ENCODE measurements at regions of chr7 and their contacts with region 1.

Region 1: DNA sequence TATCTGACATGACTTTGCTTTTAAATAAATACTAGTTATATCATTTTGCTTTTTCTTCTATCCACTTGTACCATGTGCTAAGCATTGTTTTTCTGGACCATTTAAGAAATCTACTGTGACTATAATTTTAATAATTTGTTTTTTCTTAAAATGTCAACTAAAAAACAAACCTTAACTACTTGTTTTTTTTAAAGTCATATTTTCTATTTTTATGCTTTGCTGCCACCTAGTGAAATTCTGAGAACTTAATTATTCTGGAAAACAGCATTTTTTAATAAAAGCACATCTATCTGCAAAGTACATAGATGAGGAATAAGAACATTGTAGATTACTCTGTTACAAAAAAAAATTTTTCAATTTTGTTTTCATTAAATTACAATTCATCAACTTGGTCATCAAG is 47.4 kb downstream of the ORC5 start:
- DNase-seq: no peak
- ATAC-seq: no peak
- H3K4me3 Mint-ChIP-seq: no peak overlapping the region
- H3K27ac Mint-ChIP-seq: no peak overlapping the region
- H3K4me1 Mint-ChIP-seq: no peaks in the 10 kb centered on the region
- H3K27me3 Mint-ChIP-seq: no peaks in the 10 kb centered on the region
- CTCF ChIP-seq: peak; percentile 58

Region 2: DNA sequence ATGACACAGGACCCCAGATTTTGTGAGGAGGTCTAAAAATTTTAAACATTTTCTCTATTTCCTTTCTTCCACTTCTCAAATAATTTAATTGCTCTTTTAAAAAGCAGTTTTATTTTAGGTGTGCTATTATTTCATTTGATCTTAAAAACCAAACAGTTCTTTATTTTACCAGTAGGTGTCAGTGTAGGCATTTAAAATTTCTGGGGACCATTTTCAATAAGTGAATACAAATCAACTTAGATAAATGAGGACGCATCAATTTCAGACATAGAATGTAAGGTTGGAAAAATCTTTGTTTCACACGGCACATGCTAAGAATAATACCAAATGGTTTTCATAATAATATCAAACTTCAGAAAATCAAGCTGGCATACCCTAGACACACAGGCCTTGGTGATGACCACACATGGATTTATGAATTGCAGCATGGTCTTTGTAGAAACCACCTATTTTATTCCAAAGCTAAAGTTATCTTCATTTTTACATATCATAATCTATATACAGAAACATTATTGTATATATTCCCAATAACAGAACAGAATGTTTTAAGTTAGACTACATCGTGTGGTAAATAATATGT is 586.8 kb before region 1 on chr7:
- CTCF ChIA-PET with region 1: interaction called, 6 read pairs
- POLR2A ChIA-PET with region 1: no interaction called
- intact Hi-C with region 1: loop called (anchors 5 kb)
- DNase-seq: no peak
- ATAC-seq: no peak
- H3K4me3 Mint-ChIP-seq: no peak overlapping the region
- H3K27ac Mint-ChIP-seq: no peak overlapping the region
- H3K4me1 Mint-ChIP-seq: no peaks in the 10 kb centered on the region
- H3K27me3 Mint-ChIP-seq: peaks cover 7% of the 10 kb centered on the region
- CTCF ChIP-seq: peak; percentile 69

Region 3: GRCh38 chr7:103996639-103997038 is 163.7 kb before region 1 on chr7:
- CTCF ChIA-PET with region 1: no interaction called
- POLR2A ChIA-PET with region 1: no interaction called
- intact Hi-C with region 1: no loop called
- DNase-seq: no peak
- ATAC-seq: no peak
- H3K4me3 Mint-ChIP-seq: no peak overlapping the region
- H3K27ac Mint-ChIP-seq: no peak overlapping the region
- H3K4me1 Mint-ChIP-seq: no peaks in the 10 kb centered on the region
- H3K27me3 Mint-ChIP-seq: peaks cover 7% of the 10 kb centered on the region
- CTCF ChIP-seq: no peak

Region 4: DNA sequence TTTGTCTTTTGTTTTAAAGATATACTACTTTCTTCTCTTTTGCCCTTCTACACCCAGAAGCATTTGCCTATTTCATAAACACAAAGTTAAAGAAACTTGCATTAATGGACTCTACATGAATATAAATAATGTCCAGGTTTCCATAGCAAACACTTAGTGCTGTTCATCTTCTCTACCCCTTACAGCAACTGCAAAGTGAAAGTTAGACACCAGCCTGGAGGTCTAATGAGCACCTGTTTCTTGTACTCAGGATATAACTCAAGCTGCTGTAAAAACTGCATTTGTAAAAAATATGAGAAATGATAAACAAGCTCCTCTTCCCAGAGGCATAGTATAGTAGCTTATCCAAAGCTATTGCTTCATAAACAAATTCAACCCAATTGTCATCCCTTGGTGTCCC is 94.9 kb before region 1 on chr7:
- CTCF ChIA-PET with region 1: no interaction called
- POLR2A ChIA-PET with region 1: no interaction called
- intact Hi-C with region 1: no loop called
- DNase-seq: no peak
- ATAC-seq: no peak
- H3K4me3 Mint-ChIP-seq: no peak overlapping the region
- H3K27ac Mint-ChIP-seq: no peak overlapping the region
- H3K4me1 Mint-ChIP-seq: no peaks in the 10 kb centered on the region
- H3K27me3 Mint-ChIP-seq: peaks cover 8% of the 10 kb centered on the region
- CTCF ChIP-seq: no peak

Measured in activated CD8-positive, alpha-beta T cell treated with anti-CD3 and anti-CD28 coated beads for 36 hours (primary cell).